ENCODE measurements at regions of chr12 and their contacts with region 1.

Region 1: GRCh38 chr12:53543539-53543938 is 36.3 kb upstream of the NPFF start:
- DNase-seq: no peak

Region 2: DNA sequence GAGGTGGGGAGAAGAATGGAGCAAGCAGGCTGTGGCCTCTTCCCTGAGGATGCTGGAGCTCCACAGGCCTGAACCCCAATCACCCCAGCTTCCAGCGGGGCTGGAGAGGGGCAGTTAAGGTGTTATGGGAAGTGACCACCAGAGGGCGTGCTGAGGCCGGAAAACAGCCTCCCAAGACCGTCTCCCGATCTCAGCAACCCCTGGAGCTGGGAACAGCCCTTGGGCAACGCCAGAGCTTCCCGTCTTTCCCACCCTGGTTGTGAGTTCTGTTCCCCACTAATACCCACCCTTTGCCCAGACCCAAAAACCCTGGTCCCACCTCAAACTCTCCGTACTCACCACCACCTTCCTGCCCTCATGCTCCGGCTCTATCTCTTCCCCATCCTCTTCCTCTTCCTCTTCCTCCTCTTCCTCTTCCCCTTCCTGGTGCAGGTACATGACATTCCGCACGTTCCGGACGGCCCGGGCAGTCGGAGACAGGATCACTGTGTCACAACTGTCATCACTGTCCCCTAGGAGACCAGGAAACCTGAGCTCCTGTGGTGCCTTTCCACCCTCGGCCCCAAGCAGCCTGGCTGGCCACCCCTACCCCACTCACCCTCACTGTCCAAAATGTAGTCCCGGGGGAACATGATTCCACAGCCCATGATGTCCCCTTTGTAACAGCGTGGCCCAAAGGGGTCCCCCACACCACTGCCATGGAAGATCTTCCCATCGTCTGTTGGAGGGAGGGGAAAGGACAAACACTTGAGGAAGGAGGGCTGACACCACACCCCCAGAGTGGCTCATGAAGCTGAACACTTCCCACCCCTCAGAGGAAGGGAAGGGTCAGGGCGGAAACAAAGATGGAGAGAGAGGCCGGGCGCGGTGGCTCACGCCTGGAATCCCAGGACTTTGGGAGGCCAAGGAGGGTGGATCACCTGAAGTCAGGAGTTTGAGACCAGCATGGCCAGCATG is 477.3 kb before region 1 on chr12:
- intact Hi-C with region 1: no loop called
- DNase-seq: peak; percentile 96

Region 3: DNA sequence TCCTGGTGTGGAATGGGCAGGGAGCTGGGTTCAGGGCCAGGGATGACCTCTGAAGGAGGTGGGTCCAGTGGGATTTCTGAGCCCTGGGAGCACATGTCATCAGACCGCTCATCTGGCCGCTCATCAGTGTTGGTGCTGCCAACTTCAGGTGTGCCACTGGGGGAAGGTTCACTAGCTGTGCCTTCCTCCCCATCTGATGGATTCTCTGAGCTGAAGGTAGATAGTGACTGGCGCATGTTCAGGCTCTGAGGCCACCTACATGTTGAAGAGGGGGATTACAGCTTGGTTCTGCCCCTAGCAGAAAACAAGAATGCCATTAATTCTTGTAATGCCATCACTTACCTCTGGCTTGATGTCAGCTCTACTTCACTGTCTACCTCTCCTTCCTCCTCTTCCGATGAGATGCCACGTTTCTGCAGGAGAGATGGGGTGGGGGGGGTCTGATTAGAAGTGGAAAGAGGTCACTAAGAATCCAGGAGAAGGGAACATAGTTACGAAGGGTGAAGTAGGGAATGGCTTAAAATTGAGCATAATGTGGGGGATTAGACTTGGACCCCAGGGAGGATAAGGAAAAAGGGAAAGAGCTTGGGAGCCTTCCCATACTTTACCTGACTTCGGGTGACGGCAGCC is 61.5 kb before region 1 on chr12:
- intact Hi-C with region 1: no loop called
- DNase-seq: peak; percentile 75

Region 4: GRCh38 chr12:53518381-53518780 is 25.2 kb before region 1 on chr12:
- intact Hi-C with region 1: loop called in 1 of 2 experiments (anchors 1 kb)
- DNase-seq: no peak

Region 5: GRCh38 chr12:53579545-53579955 is 36.0 kb after region 1 on chr12:
- intact Hi-C with region 1: no loop called
- DNase-seq: no peak

Region 6: GRCh38 chr12:53675651-53676453 is 132.3 kb after region 1 on chr12 and contains the start of gene ATP5MC2:
- intact Hi-C with region 1: loop called (anchors 5 kb)
- DNase-seq: peak; percentile 99
- total RNA-seq, gene ATP5MC2: 132 to 168 TPM

Region 7: DNA sequence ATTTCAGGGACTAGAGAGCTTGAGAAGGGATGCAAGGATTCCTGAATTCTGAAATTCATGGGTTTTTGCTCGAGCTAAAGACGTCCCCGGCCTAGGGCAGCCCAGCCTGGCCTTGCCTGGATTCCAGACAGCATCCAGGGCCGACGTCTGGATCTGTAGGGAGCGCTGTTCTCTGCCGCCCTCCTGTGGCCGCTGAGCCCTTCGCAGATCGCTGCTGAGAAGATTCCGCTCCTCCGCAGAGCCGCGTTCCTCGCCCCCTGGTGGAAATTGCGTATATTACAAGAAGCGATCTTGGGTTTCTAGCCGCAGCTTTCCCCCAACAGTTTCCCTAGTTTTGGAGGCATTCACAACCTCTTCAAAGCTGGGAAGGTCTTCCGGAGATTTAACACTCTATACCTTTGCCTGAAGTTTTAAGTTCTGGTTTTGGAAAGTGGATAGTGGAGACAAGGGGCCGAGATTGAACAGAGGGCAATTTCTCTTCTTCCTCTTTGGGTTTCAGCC is 203.1 kb after region 1 on chr12:
- intact Hi-C with region 1: loop called in 1 of 2 experiments (anchors 10 kb)
- DNase-seq: peak; percentile 98

Measured in posterior vena cava (tissue), 2 donors.